HepG2 (cell line): ENCODE measurements at regions of chr6 and their contacts with region 1.

Region 1: GRCh38 chr6:37207903-37208456 is 38.0 kb downstream of the PIM1 start:
- DNase-seq: peak; percentile 87
- ATAC-seq: peak; percentile 89
- H3K4me3 ChIP-seq: no peak overlapping the region
- H3K27ac ChIP-seq: no peak overlapping the region
- H3K4me1 ChIP-seq: peaks cover 35% of the 10 kb centered on the region
- H3K27me3 ChIP-seq: peaks cover 2 to 13% of the 10 kb centered on the region in 2 experiments; a peak in 2 of 5 replicates
- CTCF ChIP-seq: peak; percentile 96
- EP300 ChIP-seq: no peak
- POLR2A ChIP-seq: no peak
- RAD21 ChIP-seq: peak; percentile 92

Region 2: GRCh38 chr6:36765594-36766398 is 442.2 kb before region 1 on chr6:
- CTCF ChIA-PET with region 1: interaction called, 8 read pairs
- POLR2A ChIA-PET with region 1: no interaction called
- in situ Hi-C with region 1: loop called (anchors 5 kb)
- intact Hi-C with region 1: no loop called
- DNase-seq: peak; percentile 76
- ATAC-seq: peak; percentile 93
- H3K4me3 ChIP-seq: no peak overlapping the region
- H3K27ac ChIP-seq: no peak overlapping the region
- H3K4me1 ChIP-seq: no peaks in the 10 kb centered on the region
- H3K27me3 ChIP-seq: peaks cover 8 to 60% of the 10 kb centered on the region in 2 experiments
- CTCF ChIP-seq: peak; percentile 98
- EP300 ChIP-seq: no peak
- POLR2A ChIP-seq: no peak
- RAD21 ChIP-seq: peak; percentile 96

Region 3: GRCh38 chr6:36885461-36886401 is 322.2 kb before region 1 on chr6 and contains the start of gene C6orf89:
- CTCF ChIA-PET with region 1: interaction called, 9 read pairs
- POLR2A ChIA-PET with region 1: no interaction called
- in situ Hi-C with region 1: loop called (anchors 10 kb)
- intact Hi-C with region 1: loop called (anchors 1 kb)
- DNase-seq: peak; percentile 99
- ATAC-seq: peak; percentile 99
- H3K4me3 ChIP-seq: peak within 1 kb of the TSS; percentile 77 to 82 (median 77)
- H3K27ac ChIP-seq: peak within 1 kb of the TSS; percentile 74
- H3K4me1 ChIP-seq: peaks cover 15% of the 10 kb centered on the region
- H3K27me3 ChIP-seq: no peaks in the 10 kb centered on the region; a peak in 2 of 5 replicates
- CTCF ChIP-seq: peak; percentile 98
- EP300 ChIP-seq: peak in 1 of 2 experiments; percentile 55; a peak in 2 of 4 replicates
- POLR2A ChIP-seq: peak; percentile 42 to 63; a peak in 3 of 4 replicates
- RAD21 ChIP-seq: peak; percentile 63; the same call in 1 of the 2 replicates
- total RNA-seq, gene C6orf89: 23.9 and 32.2 TPM in 2 replicates

Region 4: DNA sequence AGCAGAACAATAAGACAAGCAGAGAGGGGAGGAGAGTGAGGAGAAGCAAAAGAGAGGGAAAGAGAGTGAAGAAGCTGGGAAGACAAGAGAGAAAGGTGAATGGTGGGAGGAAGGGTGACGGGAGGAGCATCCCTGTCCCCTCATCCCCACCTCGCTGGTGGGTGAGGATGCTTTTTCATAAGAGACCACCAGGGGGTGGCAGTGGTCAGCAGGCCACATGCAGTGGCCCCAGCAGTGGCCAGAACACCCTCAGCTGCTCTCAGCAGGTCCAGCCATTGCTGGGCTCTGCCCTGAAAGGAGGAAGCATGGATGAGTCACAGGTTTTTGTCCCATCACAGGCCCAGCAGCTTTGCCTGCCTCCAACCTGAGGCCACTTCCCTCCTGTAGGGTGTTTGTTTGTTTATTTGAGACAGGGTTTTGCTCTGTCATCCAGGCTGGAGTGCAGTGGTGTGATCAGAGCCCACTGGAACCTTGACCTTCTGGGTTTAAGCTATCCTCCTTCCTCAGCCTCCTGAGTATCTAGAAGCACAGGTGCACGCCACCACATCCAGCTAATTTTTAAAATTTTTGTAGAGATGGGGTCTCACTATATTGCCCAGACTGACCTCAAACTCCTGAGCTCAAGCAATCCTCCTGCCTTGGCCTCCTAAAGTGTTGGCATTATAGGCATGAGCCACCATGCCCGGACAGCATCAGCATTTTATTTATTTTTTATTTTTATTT is 178.6 kb before region 1 on chr6:
- CTCF ChIA-PET with region 1: interaction called, 68 read pairs
- POLR2A ChIA-PET with region 1: interaction called, 7 read pairs
- in situ Hi-C with region 1: loop called (anchors 5 kb)
- intact Hi-C with region 1: loop called (anchors 1 kb)
- DNase-seq: peak; percentile 84
- ATAC-seq: peak; percentile 89
- H3K4me3 ChIP-seq: no peak overlapping the region
- H3K27ac ChIP-seq: no peak overlapping the region
- H3K4me1 ChIP-seq: peaks cover 43% of the 10 kb centered on the region
- H3K27me3 ChIP-seq: peaks cover 4 to 47% of the 10 kb centered on the region in 2 experiments
- CTCF ChIP-seq: peak; percentile 97
- EP300 ChIP-seq: no peak; a peak in 1 of 4 replicates
- POLR2A ChIP-seq: no peak
- RAD21 ChIP-seq: peak; percentile 99

Region 5: DNA sequence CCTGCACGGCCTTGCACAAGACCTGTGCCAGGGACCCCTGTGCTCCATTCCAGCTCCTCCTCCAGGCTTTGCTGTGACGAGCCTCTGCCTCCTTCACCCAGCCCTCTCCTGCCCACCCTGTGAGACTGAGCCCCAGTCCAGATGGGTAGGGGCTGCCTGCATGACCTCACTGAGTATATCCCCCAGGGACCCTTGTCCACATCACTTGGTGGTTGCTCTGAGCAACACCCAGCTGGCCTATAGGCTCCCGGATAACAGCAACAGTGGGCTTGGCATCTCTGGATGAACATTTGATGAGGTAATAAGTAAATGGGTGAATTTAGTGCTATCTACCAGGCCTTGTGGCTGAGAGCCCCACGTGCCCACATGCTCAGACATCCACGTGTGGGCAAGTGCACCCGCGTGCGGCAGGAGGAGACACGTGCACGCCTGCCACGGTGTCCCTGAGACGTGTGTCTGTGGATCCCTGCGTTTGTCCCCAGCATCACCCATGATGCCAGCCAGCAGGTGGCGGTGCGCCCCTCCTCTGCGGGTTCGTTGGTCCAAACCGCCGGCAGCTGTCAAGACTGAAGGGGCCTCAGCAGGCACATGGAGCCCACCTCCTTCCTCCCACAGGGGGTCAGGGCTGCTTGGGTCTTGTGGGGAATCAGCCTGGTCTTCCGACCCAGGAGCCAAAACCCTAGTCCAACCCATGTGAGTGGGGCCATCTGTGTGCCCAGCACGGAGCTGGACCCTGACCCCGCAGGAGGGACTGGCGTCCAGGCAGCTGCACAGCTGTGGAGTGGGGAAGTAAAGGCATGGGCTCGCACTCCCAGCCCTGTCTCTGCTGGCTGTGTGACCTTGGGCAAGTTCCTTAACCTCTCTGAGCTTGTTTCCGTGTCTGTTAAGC is 156.6 kb before region 1 on chr6:
- CTCF ChIA-PET with region 1: interaction called, 18 read pairs
- POLR2A ChIA-PET with region 1: interaction called, 7 read pairs
- in situ Hi-C with region 1: loop called (anchors 5 kb)
- intact Hi-C with region 1: loop called (anchors 1 kb)
- DNase-seq: peak; percentile 70
- ATAC-seq: peak; percentile 82
- H3K4me3 ChIP-seq: peak overlapping the region in 2 of 3 experiments; percentile 12 to 64; a peak in 3 of 6 replicates
- H3K27ac ChIP-seq: no peak overlapping the region
- H3K4me1 ChIP-seq: peaks cover 78% of the 10 kb centered on the region
- H3K27me3 ChIP-seq: peaks cover 2 to 17% of the 10 kb centered on the region in 2 experiments; a peak in 4 of 5 replicates
- CTCF ChIP-seq: peak; percentile 100
- EP300 ChIP-seq: no peak
- POLR2A ChIP-seq: no peak
- RAD21 ChIP-seq: peak; percentile 100

Region 6: GRCh38 chr6:37314487-37315156 is 106.6 kb after region 1 on chr6:
- CTCF ChIA-PET with region 1: no interaction called
- POLR2A ChIA-PET with region 1: no interaction called
- in situ Hi-C with region 1: no loop called
- intact Hi-C with region 1: no loop called
- DNase-seq: peak; percentile 48
- ATAC-seq: peak; percentile 91
- H3K4me3 ChIP-seq: no peak overlapping the region
- H3K27ac ChIP-seq: no peak overlapping the region
- H3K4me1 ChIP-seq: no peaks in the 10 kb centered on the region
- H3K27me3 ChIP-seq: no peaks in the 10 kb centered on the region
- CTCF ChIP-seq: peak; percentile 76
- EP300 ChIP-seq: no peak
- POLR2A ChIP-seq: no peak
- RAD21 ChIP-seq: 0 out of 2 replicates have a peak, but pooled peaks have one; percentile 30